ENCODE measurements at regions of chr5 and their contacts with region 1.

Region 1: GRCh38 chr5:149852641-149853330 is 91.8 kb downstream of the PDE6A start:
- DNase-seq: no peak
- H3K4me3 ChIP-seq: no peak overlapping the region
- H3K27me3 ChIP-seq: peaks cover 6% of the 10 kb centered on the region
- CTCF ChIP-seq: peak; percentile 92

Region 2: DNA sequence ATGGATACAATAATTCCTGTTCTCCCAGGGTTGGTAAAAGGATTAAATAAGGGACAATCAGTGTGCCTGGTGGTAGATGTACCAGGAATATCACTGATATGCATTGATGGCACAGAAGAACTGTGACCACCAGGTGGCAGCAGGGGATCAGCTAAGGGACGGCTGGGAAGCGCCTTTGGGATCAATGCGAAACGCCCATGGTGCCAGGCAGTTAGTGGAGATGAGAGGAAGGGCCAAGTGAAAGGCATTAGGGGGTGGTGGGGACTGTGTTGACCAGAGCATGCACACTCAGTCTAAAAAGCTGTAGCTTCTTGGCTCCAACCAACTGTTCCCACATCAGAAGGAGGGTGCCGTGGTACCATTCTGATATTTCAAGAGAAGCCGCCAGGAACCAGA is 215.9 kb before region 1 on chr5:
- CTCF ChIA-PET with region 1: interaction called, 18 read pairs
- POLR2A ChIA-PET with region 1: no interaction called
- DNase-seq: no peak
- H3K4me3 ChIP-seq: no peak overlapping the region
- H3K27me3 ChIP-seq: no peaks in the 10 kb centered on the region
- CTCF ChIP-seq: peak; percentile 83

Region 3: GRCh38 chr5:149834246-149834855 is 18.4 kb before region 1 on chr5:
- CTCF ChIA-PET with region 1: interaction called, 275 read pairs
- POLR2A ChIA-PET with region 1: no interaction called
- DNase-seq: peak; percentile 41
- H3K4me3 ChIP-seq: no peak overlapping the region
- H3K27me3 ChIP-seq: peaks cover 1% of the 10 kb centered on the region; the same call in 1 of the 2 replicates
- CTCF ChIP-seq: peak; percentile 83

Region 4: DNA sequence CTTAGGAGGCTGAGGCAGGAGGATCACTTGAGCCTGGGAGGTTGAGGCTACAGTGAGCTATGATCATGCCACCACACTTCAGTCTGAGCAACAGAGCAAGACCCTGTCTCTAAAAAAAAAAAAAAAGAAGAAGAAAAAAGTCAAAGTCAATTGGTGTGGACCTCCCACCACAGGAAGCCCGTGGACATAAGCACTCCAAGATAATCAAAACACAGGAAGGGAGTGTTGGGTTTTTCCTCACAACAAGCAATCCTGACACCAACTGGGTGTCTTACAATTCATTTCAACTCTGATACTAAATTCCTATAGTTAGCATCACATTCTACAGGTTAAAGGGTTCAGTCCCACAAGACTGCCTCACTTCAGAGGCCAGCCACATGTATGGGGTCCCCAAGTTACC is 21.1 kb after region 1 on chr5:
- CTCF ChIA-PET with region 1: interaction called, 102 read pairs
- POLR2A ChIA-PET with region 1: no interaction called
- DNase-seq: no peak
- H3K4me3 ChIP-seq: no peak overlapping the region
- H3K27me3 ChIP-seq: peaks cover 19% of the 10 kb centered on the region
- CTCF ChIP-seq: no peak

Region 5: DNA sequence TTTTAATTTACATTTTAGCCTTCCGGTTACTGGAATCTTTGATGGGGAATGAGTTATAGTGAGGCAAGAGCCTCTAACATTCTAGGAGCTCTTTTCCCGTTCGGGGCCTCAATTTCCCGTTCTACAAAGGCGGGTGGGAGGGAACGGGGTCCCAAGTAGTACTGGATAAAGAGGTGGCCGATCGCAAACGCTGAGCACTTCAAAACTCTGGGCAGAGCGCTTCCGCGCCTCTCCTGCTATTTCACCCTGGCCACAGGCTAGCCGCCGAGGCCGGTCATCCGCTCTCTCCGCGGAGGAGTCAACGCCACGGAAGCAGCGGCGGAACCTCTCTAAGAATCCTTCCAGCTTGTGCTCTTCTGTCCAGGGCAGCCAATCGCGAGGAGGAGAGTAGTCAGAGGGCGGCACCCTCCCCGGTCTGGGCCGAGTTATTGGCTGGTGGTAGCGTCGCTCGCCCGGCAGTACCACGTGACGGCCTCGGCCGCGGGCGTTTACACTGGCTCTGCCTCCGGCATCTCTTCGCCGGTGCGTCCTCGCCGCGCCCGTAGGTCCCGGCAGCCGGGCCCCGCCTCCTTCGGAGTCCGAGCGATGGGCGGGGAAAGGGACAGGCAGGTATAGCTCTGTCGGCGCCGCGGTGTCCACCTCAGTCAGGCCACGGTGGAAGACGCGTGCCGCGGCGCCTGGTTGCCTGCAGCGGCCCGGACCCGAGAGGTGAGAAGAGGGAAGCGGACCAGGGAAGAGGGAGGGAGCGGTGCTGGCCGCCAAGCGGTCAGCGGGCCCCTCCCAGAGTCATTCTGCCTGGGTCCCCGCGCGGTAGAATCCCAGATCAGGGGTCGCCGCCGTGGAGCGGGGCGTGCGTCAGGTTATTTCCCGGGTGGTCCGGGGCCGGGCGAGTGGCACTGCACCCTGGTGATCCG is 107.7 kb after region 1 on chr5 and contains the start of gene SLC26A2:
- CTCF ChIA-PET with region 1: interaction called, 64 read pairs
- POLR2A ChIA-PET with region 1: no interaction called
- DNase-seq: peak; percentile 86
- H3K4me3 ChIP-seq: peak within 1 kb of the TSS; percentile 78
- H3K27me3 ChIP-seq: no peaks in the 10 kb centered on the region
- CTCF ChIP-seq: 0 out of 2 replicates have a peak, but pooled peaks have one; percentile 10
- polyA plus RNA-seq, gene SLC26A2: 3.3 and 7.6 TPM in 2 replicates

Region 6: DNA sequence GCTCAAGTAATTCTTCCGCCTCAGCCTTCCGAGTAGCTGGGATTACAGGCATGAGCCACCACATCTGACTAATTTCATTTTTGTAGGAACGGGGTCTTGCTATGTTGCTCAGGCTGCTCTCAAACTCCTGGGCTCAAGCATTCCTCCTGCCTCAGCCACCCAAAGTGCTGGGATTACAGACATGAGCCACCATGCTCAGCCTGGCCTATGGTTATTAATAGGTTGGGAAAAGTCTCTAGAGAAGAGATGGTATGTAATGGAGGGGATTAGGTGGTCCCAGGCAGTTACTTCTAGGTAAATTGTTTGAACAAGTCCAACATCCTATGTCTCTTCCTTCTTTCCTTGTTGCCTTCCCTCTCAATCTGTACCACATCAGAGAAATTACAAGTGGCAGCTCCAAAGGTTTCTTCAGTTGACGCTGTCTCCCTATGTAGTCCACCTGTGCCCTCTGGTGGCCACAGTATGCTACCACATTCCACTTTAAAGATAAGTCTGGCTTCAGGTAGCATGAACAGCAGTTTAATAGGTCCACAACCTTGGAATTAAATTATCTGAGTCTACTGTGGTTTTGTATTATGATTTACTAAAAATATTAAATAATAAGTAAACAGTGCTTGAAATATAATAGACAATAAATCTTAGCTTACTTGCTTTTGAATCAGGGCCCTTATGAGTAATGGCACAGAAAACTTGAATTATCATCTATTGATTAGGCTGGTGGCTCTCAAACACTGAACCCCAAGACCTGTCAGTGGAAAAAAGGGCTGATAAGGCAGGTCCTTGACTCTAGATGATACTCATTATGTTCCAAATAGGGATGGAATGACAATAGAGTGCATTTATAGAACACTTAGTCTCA is 138.0 kb after region 1 on chr5:
- CTCF ChIA-PET with region 1: interaction called, 30 read pairs
- POLR2A ChIA-PET with region 1: no interaction called
- DNase-seq: no peak
- H3K4me3 ChIP-seq: no peak overlapping the region
- H3K27me3 ChIP-seq: no peaks in the 10 kb centered on the region
- CTCF ChIP-seq: peak; percentile 92